ENCODE measurements at regions of chr12 and their contacts with region 1.

Region 1: DNA sequence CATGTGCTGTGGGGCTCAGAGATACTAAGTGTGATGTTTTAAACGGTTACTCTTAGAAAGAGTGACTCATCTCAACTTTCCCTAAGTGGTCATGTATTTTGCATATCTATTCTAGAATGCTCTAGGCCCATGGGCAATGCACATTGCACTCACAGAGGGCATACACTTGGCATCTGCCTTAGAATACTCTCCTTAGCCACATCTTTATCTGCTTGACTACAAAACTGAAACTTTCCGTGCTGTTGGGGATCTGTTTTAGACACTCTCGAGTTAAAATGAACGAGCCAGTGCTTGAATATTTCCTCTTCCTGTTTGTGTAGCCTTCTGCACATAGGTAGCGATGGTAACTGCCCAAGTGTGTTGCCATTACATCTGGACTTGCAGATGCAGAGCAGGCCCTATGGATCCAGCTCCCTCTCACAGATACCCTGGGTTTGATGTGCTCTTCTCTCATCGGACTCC is 180.5 kb downstream of the CAND1 start:
- DNase-seq: no peak
- H3K4me3 ChIP-seq: no peak overlapping the region
- H3K27ac ChIP-seq: no peak overlapping the region
- H3K27me3 ChIP-seq: no peaks in the 10 kb centered on the region
- CTCF ChIP-seq: no peak

Region 2: GRCh38 chr12:67498991-67499390 is 49.4 kb after region 1 on chr12:
- intact Hi-C with region 1: loop called in 1 of 2 experiments (anchors 5 kb)
- DNase-seq: peak in 2 of 10 donors; percentile 37 to 55
- H3K4me3 ChIP-seq: no peak overlapping the region
- H3K27ac ChIP-seq: no peak overlapping the region
- H3K27me3 ChIP-seq: no peaks in the 10 kb centered on the region
- CTCF ChIP-seq: no peak

Measured in dorsolateral prefrontal cortex (tissue), 120 donors.